ENCODE measurements at regions of chr12 and their contacts with region 1.

Region 1: DNA sequence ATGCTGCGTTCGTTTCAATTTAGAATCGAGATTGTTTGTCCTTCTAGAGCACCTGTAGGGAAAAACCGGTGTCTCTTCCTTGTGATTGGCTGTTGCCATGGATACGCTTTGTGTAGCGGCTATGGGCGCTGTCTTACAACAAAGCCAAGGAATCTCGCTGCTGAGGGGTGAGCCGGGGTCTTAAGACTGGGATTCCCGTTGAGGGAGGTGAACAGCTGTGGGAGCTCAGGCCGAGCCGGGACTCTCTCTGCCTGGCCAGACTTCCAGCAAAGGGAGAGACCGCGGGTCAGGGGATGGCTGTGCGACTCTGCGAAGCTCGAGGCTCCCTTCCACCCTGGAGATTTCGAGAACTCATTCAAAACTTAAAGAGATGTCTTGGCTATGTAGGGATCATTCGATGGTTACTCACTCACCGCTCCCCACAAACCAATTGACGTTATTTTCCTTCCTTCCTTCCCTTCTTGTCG is at the starts of genes LRRIQ1 and TSPAN19:
- DNase-seq: peak; percentile 61 to 71
- H3K4me3 ChIP-seq: peak within 1 kb of the TSS; percentile 30 to 67 (median 57)
- H3K27ac ChIP-seq: peak within 1 kb of the TSS; percentile 26 to 28
- H3K4me1 ChIP-seq: no peaks in the 10 kb centered on the region
- H3K27me3 ChIP-seq: no peaks in the 10 kb centered on the region
- CTCF ChIP-seq: no peak
- POLR2A ChIP-seq: no peak
- total RNA-seq, gene LRRIQ1: 0.16 to 1.5 (median 0.66) TPM
- total RNA-seq, gene TSPAN19: not detected

Region 2: GRCh38 chr12:84874125-84874824 is 162.0 kb before region 1 on chr12:
- intact Hi-C with region 1: loop called (anchors 10 kb)
- DNase-seq: no peak
- H3K4me3 ChIP-seq: no peak overlapping the region
- H3K27ac ChIP-seq: no peak overlapping the region
- H3K4me1 ChIP-seq: no peaks in the 10 kb centered on the region
- H3K27me3 ChIP-seq: no peaks in the 10 kb centered on the region
- CTCF ChIP-seq: peak; percentile 51 to 81 (median 64)
- POLR2A ChIP-seq: no peak

Measured in breast epithelium (tissue), 4 donors.